Naive thymus-derived CD4-positive, alpha-beta T cell (primary cell): ENCODE measurements at regions of chr14 and their contacts with region 1.

Region 1: GRCh38 chr14:91009501-91010152 is 50.8 kb downstream of the RPS6KA5 start:
- DNase-seq: peak in 7 of 9 donors; percentile 17 to 60 (median 33)
- ATAC-seq: peak; percentile 86
- H3K4me3 ChIP-seq: no peak overlapping the region
- H3K4me3 Mint-ChIP-seq: peak overlapping the region in 9 of 10 donors; percentile 26 to 77 (median 62)
- H3K27ac ChIP-seq: no peak overlapping the region
- H3K27ac Mint-ChIP-seq: peak overlapping the region; percentile 29 to 81 (median 46)
- H3K4me1 ChIP-seq: peaks cover 0 to 28% of the 10 kb centered on the region in 2 donors
- H3K4me1 Mint-ChIP-seq: peaks cover 30 to 49% (median 44%) of the 10 kb centered on the region in 7 donors
- H3K27me3 ChIP-seq: no peaks in the 10 kb centered on the region
- H3K27me3 Mint-ChIP-seq: no peaks in the 10 kb centered on the region

Region 2: GRCh38 chr14:91029456-91030217 is 20.0 kb after region 1 on chr14:
- CTCF ChIA-PET with region 1: no interaction called
- POLR2A ChIA-PET with region 1: no interaction called
- intact Hi-C with region 1: loop called in 1 of 2 experiments (anchors 2 kb)
- DNase-seq: no peak
- ATAC-seq: no peak
- H3K4me3 ChIP-seq: no peak overlapping the region
- H3K4me3 Mint-ChIP-seq: peak overlapping the region in 2 of 10 donors; percentile 21 to 43
- H3K27ac ChIP-seq: no peak overlapping the region
- H3K27ac Mint-ChIP-seq: peak overlapping the region in 4 of 9 donors; percentile 39 to 60 (median 52)
- H3K4me1 ChIP-seq: no peaks in the 10 kb centered on the region
- H3K4me1 Mint-ChIP-seq: peaks cover 33 to 69% (median 62%) of the 10 kb centered on the region in 7 donors
- H3K27me3 ChIP-seq: no peaks in the 10 kb centered on the region
- H3K27me3 Mint-ChIP-seq: no peaks in the 10 kb centered on the region